Endothelial cell of umbilical vein (primary cell): ENCODE measurements at regions of chr12 and their contacts with region 1.

Region 1: GRCh38 chr12:9906873-9907272 is 25.3 kb downstream of the CLEC2A start:
- DNase-seq: no peak
- H3K4me3 ChIP-seq: no peak overlapping the region
- H3K27ac ChIP-seq: no peak overlapping the region
- H3K4me1 ChIP-seq: no peaks in the 10 kb centered on the region
- H3K27me3 ChIP-seq: peaks cover 3 to 8% of the 10 kb centered on the region in 2 experiments
- CTCF ChIP-seq: no peak
- POLR2A ChIP-seq: no peak

Region 2: DNA sequence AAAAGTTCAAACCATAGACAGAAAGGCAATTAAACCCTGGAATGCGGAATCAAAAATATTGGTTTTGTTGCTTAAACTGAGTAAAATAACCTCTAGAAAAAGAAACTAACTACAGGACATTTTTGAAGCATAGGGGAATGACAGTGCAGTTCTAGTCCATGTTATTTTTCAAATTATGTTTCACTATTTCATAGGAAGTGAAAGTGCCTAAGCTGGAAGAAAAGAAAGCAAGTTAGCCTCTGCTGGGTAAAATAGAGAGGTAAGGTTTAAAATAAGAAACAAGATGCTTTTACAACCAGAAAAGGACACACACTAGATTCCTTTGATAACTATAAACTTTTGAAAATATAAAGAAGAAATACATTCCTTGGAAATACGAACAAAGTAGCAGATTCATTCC is 175.1 kb before region 1 on chr12:
- CTCF ChIA-PET with region 1: no interaction called
- POLR2A ChIA-PET with region 1: no interaction called
- dilution Hi-C with region 1: no loop called
- intact Hi-C with region 1: no loop called
- DNase-seq: no peak
- H3K4me3 ChIP-seq: no peak overlapping the region
- H3K27ac ChIP-seq: no peak overlapping the region
- H3K4me1 ChIP-seq: peaks cover 9% of the 10 kb centered on the region
- H3K27me3 ChIP-seq: no peaks in the 10 kb centered on the region
- CTCF ChIP-seq: no peak
- POLR2A ChIP-seq: no peak

Region 3: DNA sequence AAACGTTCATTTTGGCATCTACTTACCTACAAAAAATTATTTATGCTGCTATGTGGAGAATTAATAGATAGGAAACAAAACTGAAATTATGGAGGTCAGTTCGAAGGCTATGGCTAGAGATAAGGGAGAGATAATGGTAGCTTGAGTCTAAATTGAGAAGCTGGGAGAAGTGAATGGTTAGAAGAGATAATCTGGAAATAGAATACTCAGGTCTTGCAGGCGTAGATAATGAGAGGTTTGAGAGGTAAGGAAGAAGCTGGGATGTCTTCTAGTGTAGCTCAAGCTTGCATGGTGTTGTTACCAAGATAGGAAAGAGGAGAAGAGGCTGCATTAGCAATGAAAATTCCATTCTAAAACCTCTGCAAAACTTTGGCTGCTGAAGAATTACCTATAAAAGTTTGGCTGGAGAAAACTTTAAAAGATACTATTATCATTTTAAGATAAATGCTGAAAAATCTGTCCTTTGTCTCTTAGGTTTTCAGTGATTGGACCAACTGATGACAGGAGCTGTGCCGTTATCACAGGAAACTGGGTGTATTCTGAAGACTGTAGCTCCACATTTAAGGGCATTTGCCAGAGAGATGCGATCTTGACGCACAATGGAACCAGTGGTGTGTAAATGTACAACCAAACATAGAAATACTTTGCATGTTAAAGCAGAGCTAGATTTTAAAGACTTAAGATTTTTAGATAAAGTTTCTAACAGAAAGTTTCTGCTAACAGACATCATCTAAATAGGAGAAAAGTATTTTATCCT is 11.5 kb before region 1 on chr12:
- CTCF ChIA-PET with region 1: interaction called, 20 read pairs
- POLR2A ChIA-PET with region 1: no interaction called
- dilution Hi-C with region 1: no loop called
- intact Hi-C with region 1: no loop called
- DNase-seq: no peak
- H3K4me3 ChIP-seq: no peak overlapping the region
- H3K27ac ChIP-seq: no peak overlapping the region
- H3K4me1 ChIP-seq: no peaks in the 10 kb centered on the region
- H3K27me3 ChIP-seq: peaks cover 8% of the 10 kb centered on the region in 2 experiments
- CTCF ChIP-seq: no peak
- POLR2A ChIP-seq: no peak

Region 4: DNA sequence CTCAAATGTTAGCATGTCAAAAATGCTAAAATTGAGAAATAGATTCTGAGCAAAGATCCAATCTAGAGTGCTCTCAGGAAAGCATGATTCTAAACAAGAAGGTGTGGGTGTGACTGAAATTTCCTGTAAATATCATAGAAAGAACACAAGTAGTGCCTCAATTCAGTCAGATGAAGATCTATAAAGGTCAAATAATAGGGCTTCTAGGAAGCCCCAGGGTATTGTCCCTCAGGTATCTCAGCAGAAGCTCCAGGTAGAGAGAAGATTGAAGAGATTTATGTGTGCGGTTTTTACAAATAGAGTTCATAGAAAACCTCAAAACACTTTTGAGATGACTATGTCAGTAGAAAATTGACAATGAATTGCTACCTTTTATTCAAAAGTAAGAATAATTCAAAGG is 413.8 kb after region 1 on chr12:
- CTCF ChIA-PET with region 1: no interaction called
- POLR2A ChIA-PET with region 1: no interaction called
- dilution Hi-C with region 1: no loop called
- intact Hi-C with region 1: no loop called
- DNase-seq: no peak
- H3K4me3 ChIP-seq: no peak overlapping the region
- H3K27ac ChIP-seq: no peak overlapping the region
- H3K4me1 ChIP-seq: no peaks in the 10 kb centered on the region
- H3K27me3 ChIP-seq: no peaks in the 10 kb centered on the region
- CTCF ChIP-seq: no peak
- POLR2A ChIP-seq: no peak